Dorsolateral prefrontal cortex (tissue), 120 donors: ENCODE measurements at regions of chr14 and their contacts with region 1.

Region 1: GRCh38 chr14:23379366-23380196 is 2.7 kb downstream of the CMTM5 start:
- DNase-seq: peak in 2 of 10 donors; percentile 41 to 62
- H3K4me3 ChIP-seq: peak overlapping the region in 20 of 59 donors; percentile 46 to 78 (median 62)
- H3K27ac ChIP-seq: peak overlapping the region in 54 of 59 donors; percentile 43 to 99 (median 95)
- H3K27me3 ChIP-seq: no peaks in the 10 kb centered on the region
- CTCF ChIP-seq: peak; percentile 28 to 95 (median 80)

Region 2: GRCh38 chr14:23130871-23131270 is 248.7 kb before region 1 on chr14:
- intact Hi-C with region 1: no loop called
- DNase-seq: no peak
- H3K4me3 ChIP-seq: no peak overlapping the region
- H3K27ac ChIP-seq: peak overlapping the region in 28 of 59 donors; percentile 1 to 55 (median 37)
- H3K27me3 ChIP-seq: no peaks in the 10 kb centered on the region
- CTCF ChIP-seq: no peak

Region 3: DNA sequence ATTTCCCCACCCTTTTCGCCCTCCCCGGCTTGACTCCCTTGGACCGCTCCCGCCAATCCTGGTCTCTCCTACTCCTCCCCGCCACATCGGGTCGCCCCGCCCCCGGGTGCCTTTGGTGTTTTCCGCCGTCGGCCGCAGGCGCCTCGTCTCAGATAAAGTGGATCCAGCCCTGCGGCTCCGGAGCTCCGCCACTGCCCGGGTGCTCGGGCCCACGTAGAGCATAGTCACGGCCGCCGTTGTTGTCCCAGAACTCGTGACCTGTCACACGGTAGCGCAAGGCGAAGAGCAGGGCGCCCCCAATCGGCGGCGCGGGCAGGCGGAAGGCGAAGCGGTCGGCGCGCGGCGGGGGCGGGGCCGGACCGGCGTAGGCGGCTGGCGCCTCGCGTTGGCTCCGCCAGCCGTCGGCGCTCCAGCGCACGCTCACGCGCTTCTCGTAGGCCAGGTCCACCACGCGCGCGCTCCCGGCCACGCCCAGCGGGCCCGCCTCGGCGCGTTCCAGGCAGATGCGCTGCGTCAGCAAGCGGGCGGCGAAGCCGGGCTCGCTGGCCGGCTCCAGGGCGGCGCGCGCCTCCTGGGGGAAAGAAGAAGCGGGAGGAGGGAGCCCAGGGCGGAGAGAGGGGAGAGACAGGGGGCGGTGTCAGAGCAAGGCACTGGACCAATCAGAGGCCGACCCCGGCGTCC is 78.2 kb before region 1 on chr14:
- intact Hi-C with region 1: loop called (anchors 1 to 2 kb)
- DNase-seq: peak; percentile 91 to 99 (median 96)
- H3K4me3 ChIP-seq: peak overlapping the region; percentile 61 to 99 (median 85)
- H3K27ac ChIP-seq: peak overlapping the region; percentile 94 to 100 (median 99)
- H3K27me3 ChIP-seq: no peaks in the 10 kb centered on the region
- CTCF ChIP-seq: peak; percentile 46 to 97 (median 77)

Region 4: DNA sequence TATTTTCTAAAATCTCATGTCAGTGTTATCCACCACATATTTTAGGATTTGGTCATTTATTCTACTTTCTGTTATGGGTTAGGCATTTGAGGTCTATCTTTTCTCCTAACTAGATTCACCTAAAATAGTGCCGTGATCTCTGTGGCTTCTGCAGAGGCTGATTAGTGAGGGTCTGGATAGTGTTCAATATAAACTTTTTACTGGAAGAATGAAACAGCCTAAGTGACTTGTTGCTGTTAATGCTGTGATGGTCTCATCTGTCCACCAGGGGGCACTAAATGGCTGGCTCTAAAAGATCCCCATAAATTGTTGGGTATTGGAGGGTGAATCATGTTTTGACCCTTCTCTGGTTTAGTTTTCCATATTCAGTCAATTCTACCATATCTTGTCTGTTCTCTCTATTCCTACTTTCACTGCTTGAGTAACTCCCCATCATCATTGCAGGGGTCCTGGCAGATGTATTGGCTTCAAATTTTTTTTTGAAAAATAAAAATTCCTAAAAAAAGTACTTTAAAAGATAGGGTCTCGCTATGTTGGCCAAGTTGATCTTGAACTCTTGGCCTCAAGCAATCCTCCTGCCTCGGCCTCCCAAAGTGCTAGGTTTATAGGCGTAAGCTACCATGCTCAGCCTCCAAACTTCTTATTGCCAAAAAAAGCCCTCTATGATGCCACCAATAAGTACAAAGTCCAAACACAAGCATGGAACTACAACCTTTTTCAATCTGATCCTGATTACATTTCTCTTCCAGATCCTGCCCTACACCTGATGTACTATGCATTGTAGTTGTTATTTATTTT is 51.4 kb before region 1 on chr14:
- intact Hi-C with region 1: loop called (anchors 1 kb)
- DNase-seq: peak in 7 of 10 donors; percentile 59 to 88 (median 74)
- H3K4me3 ChIP-seq: peak overlapping the region in 1 of 59 donors; percentile 1
- H3K27ac ChIP-seq: peak overlapping the region in 20 of 59 donors; percentile 5 to 70 (median 36)
- H3K27me3 ChIP-seq: no peaks in the 10 kb centered on the region
- CTCF ChIP-seq: peak; percentile 85 to 99 (median 94)

Region 5: GRCh38 chr14:23360496-23360895 is 19.1 kb before region 1 on chr14:
- intact Hi-C with region 1: loop called (anchors 1 kb)
- DNase-seq: peak in 9 of 10 donors; percentile 69 to 84 (median 80)
- H3K4me3 ChIP-seq: peak overlapping the region in 16 of 59 donors; percentile 4 to 47 (median 18)
- H3K27ac ChIP-seq: peak overlapping the region in 57 of 59 donors; percentile 62 to 99 (median 87)
- H3K27me3 ChIP-seq: peaks cover 0 to 24% (median 7%) of the 10 kb centered on the region in 45 donors
- CTCF ChIP-seq: peak in 53 of 56 donors; percentile 26 to 84 (median 58)

Region 6: DNA sequence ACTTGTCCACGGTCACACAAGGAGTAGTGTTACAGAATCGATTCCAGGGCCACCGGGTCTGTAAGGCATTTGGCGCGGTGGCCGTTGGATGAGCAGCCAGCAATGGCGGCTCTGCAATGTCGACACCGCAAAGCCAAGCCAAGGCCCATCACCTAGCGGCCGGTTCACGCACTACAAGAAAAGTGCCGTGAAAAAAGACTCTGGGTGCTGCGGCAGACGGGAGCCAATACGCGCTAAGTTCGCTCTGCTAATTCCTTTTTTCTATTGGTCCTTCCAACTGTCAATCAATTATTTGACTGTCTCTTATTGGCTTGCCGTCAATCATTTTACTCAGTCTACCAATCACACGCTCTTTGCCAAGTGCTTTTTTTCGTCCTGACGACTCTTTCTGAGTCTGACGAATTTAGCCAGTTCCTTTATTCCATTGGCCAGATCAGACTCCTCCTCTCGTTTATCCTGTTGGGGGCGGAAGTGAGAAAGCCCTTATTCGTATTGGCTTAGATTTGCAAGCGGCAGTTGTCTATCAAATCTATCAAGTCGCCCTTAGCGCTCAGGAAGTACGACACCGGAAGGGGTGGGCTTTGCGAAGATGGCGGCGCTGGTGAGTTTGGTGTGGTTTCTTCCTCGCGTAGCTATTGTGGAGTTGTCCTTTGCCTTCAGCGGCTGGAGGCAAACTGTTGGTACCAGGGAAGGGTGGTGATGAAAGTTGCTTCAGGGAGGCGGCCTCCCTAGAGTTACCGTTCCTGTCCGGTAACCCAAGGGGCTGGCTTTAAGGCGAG is 89.7 kb after region 1 on chr14 and contains the start of gene NGDN:
- intact Hi-C with region 1: loop called (anchors 5 to 10 kb)
- DNase-seq: peak; percentile 96 to 100 (median 97)
- H3K4me3 ChIP-seq: peak within 1 kb of the TSS; percentile 62 to 100 (median 93)
- H3K27ac ChIP-seq: peak within 1 kb of the TSS; percentile 72 to 99 (median 95)
- H3K27me3 ChIP-seq: no peaks in the 10 kb centered on the region
- CTCF ChIP-seq: peak; percentile 67 to 97 (median 89)
- total RNA-seq, gene NGDN: 23.4 to 51.0 (median 37.9) TPM